K562 (cell line): ENCODE measurements at regions of chr12 and their contacts with region 1.

Region 1: DNA sequence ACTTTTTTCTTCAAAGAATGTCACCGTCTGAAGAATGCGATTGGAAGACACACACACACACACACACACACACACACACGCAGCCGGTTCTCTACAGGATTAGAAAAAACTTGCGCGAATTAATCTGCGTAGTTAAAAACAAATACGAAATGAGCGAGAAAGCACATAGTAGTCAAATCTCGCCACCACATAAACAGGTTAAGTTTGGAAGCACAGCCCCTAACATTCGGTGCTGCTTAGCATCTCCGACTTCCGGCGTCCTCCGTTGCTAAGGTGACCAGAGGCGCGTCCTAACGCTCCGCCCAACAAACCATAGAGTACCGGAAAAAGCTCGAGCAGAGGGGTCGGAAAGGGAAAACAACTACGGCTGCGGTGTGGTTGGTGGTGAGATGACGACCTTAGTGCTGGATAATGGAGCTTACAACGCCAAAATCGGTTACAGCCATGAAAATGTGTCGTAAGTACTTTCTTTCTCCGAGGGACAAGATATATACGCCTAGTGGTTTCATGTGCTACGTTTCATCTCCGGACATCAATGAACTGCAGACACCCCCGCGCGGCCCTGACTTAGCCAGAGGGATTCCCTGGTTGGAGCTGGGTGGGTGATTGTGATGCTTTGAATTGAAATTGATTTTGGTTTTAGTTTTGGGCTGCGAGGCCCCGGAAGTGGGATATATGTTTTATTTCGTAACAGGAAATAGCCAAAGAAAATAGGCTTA is at the start of gene ACTR6:
- DNase-seq: peak; percentile 88 to 97 (median 90)
- ATAC-seq: peak; percentile 87
- H3K4me3 ChIP-seq: peak within 1 kb of the TSS; percentile 73
- H3K27ac ChIP-seq: peak within 1 kb of the TSS; percentile 79
- H3K4me1 ChIP-seq: peaks cover 2 to 29% of the 10 kb centered on the region in 2 experiments; a peak in 3 of 5 replicates
- H3K27me3 ChIP-seq: no peaks in the 10 kb centered on the region
- CTCF ChIP-seq: no peak
- EP300 ChIP-seq: peak; percentile 52
- POLR2A ChIP-seq: peak; percentile 82
- RAD21 ChIP-seq: no peak
- polyA plus RNA-seq, gene ACTR6: 99.8 to 109 TPM

Region 2: DNA sequence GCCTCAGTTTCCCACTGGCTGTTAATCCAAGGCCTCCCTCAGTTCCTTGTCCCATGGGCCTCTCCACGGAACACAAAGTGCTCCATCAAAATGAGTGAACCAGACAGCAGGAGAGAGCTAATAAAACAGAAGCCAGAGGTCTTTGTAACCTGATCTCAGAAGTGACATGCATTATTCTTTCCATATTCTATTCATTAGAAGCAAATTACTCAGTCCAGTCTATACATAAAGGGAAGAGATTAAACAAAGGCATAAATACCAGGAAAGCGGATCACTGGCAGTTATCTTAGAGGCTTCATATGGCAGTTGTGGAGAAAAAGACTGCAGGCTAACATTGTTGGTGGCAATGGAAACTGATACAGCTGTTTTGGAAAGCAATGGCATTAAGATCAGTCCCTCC is 723.7 kb before region 1 on chr12:
- CTCF ChIA-PET with region 1: no interaction called
- POLR2A ChIA-PET with region 1: no interaction called
- in situ Hi-C with region 1: no loop called
- intact Hi-C with region 1: no loop called
- DNase-seq: no peak
- ATAC-seq: no peak
- H3K4me3 ChIP-seq: no peak overlapping the region
- H3K27ac ChIP-seq: no peak overlapping the region
- H3K4me1 ChIP-seq: no peaks in the 10 kb centered on the region
- H3K27me3 ChIP-seq: no peaks in the 10 kb centered on the region
- CTCF ChIP-seq: no peak
- EP300 ChIP-seq: no peak
- POLR2A ChIP-seq: no peak
- RAD21 ChIP-seq: no peak

Region 3: GRCh38 chr12:100142851-100143559 is 57.6 kb before region 1 on chr12 and contains the start of gene BLTP3B:
- CTCF ChIA-PET with region 1: interaction called, 3 read pairs
- POLR2A ChIA-PET with region 1: no interaction called
- in situ Hi-C with region 1: no loop called
- intact Hi-C with region 1: loop called (anchors 2 kb)
- DNase-seq: peak; percentile 90 to 94 (median 91)
- ATAC-seq: peak; percentile 93
- H3K4me3 ChIP-seq: peak within 1 kb of the TSS; percentile 97
- H3K27ac ChIP-seq: peak within 1 kb of the TSS; percentile 71
- H3K4me1 ChIP-seq: peaks cover 15 to 18% of the 10 kb centered on the region in 2 experiments; a peak in 4 of 5 replicates
- H3K27me3 ChIP-seq: no peaks in the 10 kb centered on the region
- CTCF ChIP-seq: no peak
- EP300 ChIP-seq: no peak
- POLR2A ChIP-seq: peak; percentile 83
- RAD21 ChIP-seq: no peak
- polyA plus RNA-seq, gene BLTP3B: 3.9 to 5.0 TPM

Region 4: GRCh38 chr12:100163416-100164152 is 37.0 kb before region 1 on chr12:
- CTCF ChIA-PET with region 1: no interaction called
- POLR2A ChIA-PET with region 1: interaction called, 3 read pairs
- in situ Hi-C with region 1: no loop called
- intact Hi-C with region 1: loop called (anchors 5 kb)
- DNase-seq: peak; percentile 54 to 80 (median 70)
- ATAC-seq: peak; percentile 100
- H3K4me3 ChIP-seq: no peak overlapping the region
- H3K27ac ChIP-seq: no peak overlapping the region
- H3K4me1 ChIP-seq: peaks cover 0 to 5% of the 10 kb centered on the region in 2 experiments; a peak in 3 of 5 replicates
- H3K27me3 ChIP-seq: peaks cover 5 to 10% of the 10 kb centered on the region in 2 experiments; a peak in 4 of 5 replicates
- CTCF ChIP-seq: peak in 2 of 3 experiments; percentile 3 to 27; a peak in 2 of 6 replicates
- EP300 ChIP-seq: no peak
- POLR2A ChIP-seq: no peak
- RAD21 ChIP-seq: peak in 1 of 2 experiments; percentile 27; a peak in 2 of 4 replicates

Region 5: DNA sequence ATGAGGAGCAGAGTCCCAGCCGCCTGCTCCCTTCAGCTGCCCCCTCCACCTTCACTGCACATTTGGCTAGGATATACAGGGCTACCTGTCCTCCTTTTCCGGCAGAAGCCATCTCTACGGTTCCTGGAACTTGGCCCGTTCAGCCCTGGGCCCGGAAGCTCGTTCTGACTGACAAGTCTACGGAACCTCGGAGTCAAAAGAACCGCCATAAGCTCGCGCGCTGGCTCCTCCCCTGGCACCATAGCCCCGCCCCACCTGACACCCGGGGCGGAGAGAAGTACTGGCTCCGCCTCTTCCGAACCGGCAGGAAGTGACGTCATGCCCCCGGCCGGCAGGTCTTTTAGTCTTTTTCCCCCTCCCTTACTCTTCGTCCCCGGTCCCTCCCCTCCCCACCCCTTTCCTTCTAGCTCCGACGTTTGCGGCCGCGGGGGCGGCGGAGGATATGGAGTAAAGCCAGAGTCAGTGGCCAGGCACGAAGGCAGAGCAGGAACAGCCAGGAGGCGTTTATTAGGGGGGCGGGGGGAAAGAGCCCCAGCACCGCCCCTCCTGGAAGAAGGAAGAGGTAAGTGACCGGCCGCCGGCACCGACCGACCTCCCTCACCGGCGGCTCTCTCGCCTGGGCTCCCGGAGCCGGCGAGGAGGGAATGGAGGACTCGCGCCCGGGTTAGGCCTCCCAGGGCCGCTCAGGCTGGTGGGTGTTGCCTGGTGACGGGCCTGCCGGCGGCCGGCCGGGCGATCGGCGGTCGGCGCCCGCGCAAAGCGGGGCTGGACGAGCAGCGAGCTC is 66.4 kb after region 1 on chr12 and contains the starts of genes DEPDC4 and SCYL2:
- CTCF ChIA-PET with region 1: no interaction called
- POLR2A ChIA-PET with region 1: no interaction called
- in situ Hi-C with region 1: no loop called
- intact Hi-C with region 1: loop called (anchors 5 kb)
- DNase-seq: peak; percentile 96 to 98 (median 96)
- ATAC-seq: peak; percentile 85
- H3K4me3 ChIP-seq: peak within 1 kb of the TSS; percentile 95
- H3K27ac ChIP-seq: peak within 1 kb of the TSS; percentile 96
- H3K4me1 ChIP-seq: peaks cover 0 to 10% of the 10 kb centered on the region in 2 experiments; a peak in 2 of 5 replicates
- H3K27me3 ChIP-seq: no peaks in the 10 kb centered on the region
- CTCF ChIP-seq: no peak
- EP300 ChIP-seq: no peak; the same call in none of the 2 replicates
- POLR2A ChIP-seq: peak; percentile 90
- RAD21 ChIP-seq: no peak
- polyA plus RNA-seq, gene DEPDC4: 11.9 to 13.2 TPM
- polyA plus RNA-seq, gene SCYL2: 9.9 to 11.8 TPM